Aorta (tissue), 5 donors: ENCODE measurements at regions of chr12 and their contacts with region 1.

Region 1: GRCh38 chr12:120437754-120438494 is at the start of gene COX6A1:
- DNase-seq: peak; percentile 96 to 97
- ATAC-seq: peak; percentile 94
- H3K4me3 ChIP-seq: peak within 1 kb of the TSS; percentile 45 to 76
- H3K27ac ChIP-seq: peak within 1 kb of the TSS in 1 of 2 donors; percentile 28
- H3K4me1 ChIP-seq: no peaks in the 10 kb centered on the region
- H3K27me3 ChIP-seq: no peaks in the 10 kb centered on the region
- total RNA-seq, gene COX6A1: 176 to 246 TPM

Region 2: DNA sequence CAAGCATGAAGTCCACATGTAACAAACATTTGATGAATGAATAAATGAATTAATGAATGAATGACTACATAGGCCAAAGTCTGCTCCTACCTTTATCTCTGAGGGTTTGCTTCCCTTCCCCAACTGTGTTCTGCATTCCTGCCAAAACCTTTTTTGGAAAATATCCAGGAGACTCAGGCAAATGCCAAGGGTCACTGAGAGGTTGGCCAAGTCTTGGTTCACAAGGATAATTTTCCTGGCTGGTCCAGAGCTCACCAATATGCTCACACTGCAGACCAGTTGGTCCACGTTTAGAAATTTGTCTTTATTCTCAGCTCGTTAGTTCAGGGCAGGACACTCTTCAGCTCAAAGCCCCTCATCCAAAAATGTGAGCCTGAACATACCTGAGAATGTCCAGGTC is 834.2 kb before region 1 on chr12:
- intact Hi-C with region 1: no loop called
- DNase-seq: no peak
- ATAC-seq: no peak
- H3K4me3 ChIP-seq: no peak overlapping the region
- H3K27ac ChIP-seq: no peak overlapping the region
- H3K4me1 ChIP-seq: no peaks in the 10 kb centered on the region
- H3K27me3 ChIP-seq: no peaks in the 10 kb centered on the region

Region 3: DNA sequence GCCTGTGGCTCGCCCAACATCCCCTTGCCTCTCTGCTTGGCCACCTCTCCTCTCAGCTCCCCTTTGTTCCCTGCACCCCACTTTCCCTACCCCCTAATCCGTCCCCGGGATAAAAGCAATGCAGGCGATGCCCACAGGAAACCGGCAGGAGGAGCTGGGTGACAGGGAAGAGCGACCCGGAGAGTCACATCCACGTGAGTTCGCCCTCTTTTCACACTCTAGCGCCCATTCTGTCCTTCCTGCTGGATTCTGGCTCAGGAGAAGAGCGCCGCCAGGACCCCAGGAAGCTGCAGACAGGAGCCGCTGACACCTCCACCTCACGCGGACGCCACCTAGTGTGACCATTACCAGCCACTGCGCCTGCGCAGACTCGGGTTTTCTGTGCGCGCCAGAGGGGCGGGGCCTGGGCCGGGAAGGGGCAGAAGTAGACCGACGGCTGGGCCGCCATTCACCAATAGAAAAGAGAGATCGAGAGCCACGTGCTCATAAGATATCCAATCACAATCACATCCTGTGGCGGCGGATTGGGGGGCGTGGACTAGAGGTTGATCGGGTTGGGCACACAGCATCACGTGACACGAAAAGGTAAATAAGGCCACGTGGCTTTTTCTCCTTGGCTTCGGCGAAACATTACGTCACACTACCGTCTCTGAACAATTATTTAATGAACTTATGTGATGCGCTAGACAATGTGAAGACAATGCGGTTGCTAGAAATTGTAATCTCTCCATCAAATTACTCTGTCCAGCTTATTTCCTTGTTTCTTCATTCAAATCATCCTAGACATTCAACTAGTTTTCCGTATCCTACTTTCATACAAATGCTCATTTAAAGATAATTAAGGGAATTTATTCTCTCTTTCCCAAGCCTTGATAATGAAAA is 120.5 kb before region 1 on chr12:
- intact Hi-C with region 1: loop called (anchors 5 to 10 kb)
- DNase-seq: peak; percentile 99 to 100
- ATAC-seq: peak; percentile 100
- H3K4me3 ChIP-seq: peak overlapping the region; percentile 4 to 71
- H3K27ac ChIP-seq: peak overlapping the region in 1 of 2 donors; percentile 1
- H3K4me1 ChIP-seq: no peaks in the 10 kb centered on the region
- H3K27me3 ChIP-seq: no peaks in the 10 kb centered on the region

Region 4: DNA sequence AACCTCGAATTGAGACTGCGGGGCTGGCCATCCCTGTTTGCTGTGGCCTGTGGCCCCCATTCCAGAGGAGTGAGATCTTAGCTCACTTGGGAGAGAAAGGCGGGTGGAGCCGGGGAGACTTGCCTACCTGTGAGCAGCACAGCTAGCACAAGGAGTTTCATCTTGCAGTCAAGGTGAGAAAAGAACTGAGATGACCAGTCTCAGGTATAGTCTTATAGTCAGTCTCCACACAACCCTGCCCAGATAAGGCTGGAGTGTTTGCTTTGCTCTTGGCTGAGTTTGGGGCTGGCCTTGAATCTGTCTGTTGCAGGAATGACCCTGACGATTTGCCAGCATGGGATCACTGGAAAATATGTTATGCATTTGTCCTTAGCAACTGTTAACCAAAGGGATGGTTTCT is 110.3 kb before region 1 on chr12 and contains the start of gene PLA2G1B:
- intact Hi-C with region 1: loop called (anchors 5 to 10 kb)
- DNase-seq: no peak
- ATAC-seq: no peak
- H3K4me3 ChIP-seq: no peak within 1 kb of the TSS
- H3K27ac ChIP-seq: no peak within 1 kb of the TSS
- H3K4me1 ChIP-seq: no peaks in the 10 kb centered on the region
- H3K27me3 ChIP-seq: no peaks in the 10 kb centered on the region
- total RNA-seq, gene PLA2G1B: 0.91 to 1.2 TPM